HCT116 (cell line): ENCODE measurements at regions of chr7 and their contacts with region 1.

Region 1: GRCh38 chr7:29921404-29922010 is 68.1 kb downstream of the SCRN1 start:
- DNase-seq: peak; percentile 46
- ATAC-seq: peak; percentile 93
- H3K4me3 ChIP-seq: no peak overlapping the region
- H3K27ac ChIP-seq: no peak overlapping the region
- H3K4me1 ChIP-seq: no peaks in the 10 kb centered on the region
- H3K27me3 ChIP-seq: no peaks in the 10 kb centered on the region
- CTCF ChIP-seq: peak; percentile 77 to 96 (median 88)
- POLR2A ChIP-seq: no peak
- RAD21 ChIP-seq: peak; percentile 86

Region 2: GRCh38 chr7:29639881-29640595 is 281.5 kb before region 1 on chr7:
- CTCF ChIA-PET with region 1: interaction called, 5 read pairs
- POLR2A ChIA-PET with region 1: no interaction called
- RAD21 ChIA-PET with region 1: no interaction called
- intact Hi-C with region 1: loop called (anchors 2 kb)
- DNase-seq: no peak
- ATAC-seq: no peak
- H3K4me3 ChIP-seq: no peak overlapping the region
- H3K27ac ChIP-seq: no peak overlapping the region
- H3K4me1 ChIP-seq: peaks cover 11 to 31% of the 10 kb centered on the region in 2 experiments
- H3K27me3 ChIP-seq: no peaks in the 10 kb centered on the region
- CTCF ChIP-seq: no peak
- POLR2A ChIP-seq: no peak
- RAD21 ChIP-seq: no peak

Region 3: DNA sequence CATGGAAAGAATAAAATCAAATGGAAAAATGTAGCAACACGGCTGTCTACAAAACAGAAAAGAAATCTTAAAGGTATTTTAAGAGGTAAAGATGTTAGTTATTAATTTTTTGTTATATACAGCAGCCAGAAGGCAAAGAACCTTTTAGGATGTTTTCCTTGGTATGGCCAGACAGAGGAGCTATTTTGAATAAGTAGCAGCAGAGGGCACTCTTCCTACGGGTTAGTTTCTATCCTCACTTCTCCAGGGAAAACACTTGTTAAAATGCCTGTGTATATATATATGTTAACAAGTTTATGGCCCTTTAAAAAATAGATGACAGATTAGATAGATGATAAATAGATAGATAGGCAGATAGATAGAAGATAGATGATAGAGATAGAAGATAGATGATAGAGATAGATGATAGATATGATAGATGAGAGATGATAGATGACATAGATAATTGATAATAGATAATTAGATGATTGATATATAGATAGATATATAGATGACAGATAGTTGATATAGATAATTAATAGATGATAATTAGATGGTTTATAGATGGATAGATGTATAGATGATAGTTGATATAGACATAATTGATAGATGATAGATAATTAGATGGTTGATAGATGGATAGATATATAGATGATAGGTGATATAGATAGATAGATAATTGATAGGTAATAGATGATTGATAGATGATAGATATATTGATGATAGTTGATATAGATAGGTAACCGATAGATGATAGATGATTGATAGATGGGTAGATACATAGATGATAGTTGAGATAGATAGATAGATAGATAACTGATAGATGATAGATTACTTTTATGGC is 173.0 kb before region 1 on chr7:
- CTCF ChIA-PET with region 1: interaction called, 37 read pairs
- POLR2A ChIA-PET with region 1: no interaction called
- RAD21 ChIA-PET with region 1: interaction called, 4 read pairs
- intact Hi-C with region 1: loop called (anchors 1 kb)
- DNase-seq: peak; percentile 35
- ATAC-seq: peak; percentile 91
- H3K4me3 ChIP-seq: no peak overlapping the region
- H3K27ac ChIP-seq: no peak overlapping the region
- H3K4me1 ChIP-seq: no peaks in the 10 kb centered on the region
- H3K27me3 ChIP-seq: no peaks in the 10 kb centered on the region
- CTCF ChIP-seq: peak; percentile 56 to 79 (median 62)
- POLR2A ChIP-seq: no peak
- RAD21 ChIP-seq: peak; percentile 74

Region 4: GRCh38 chr7:29764227-29764626 is 157.3 kb before region 1 on chr7:
- CTCF ChIA-PET with region 1: interaction called, 10 read pairs
- POLR2A ChIA-PET with region 1: no interaction called
- RAD21 ChIA-PET with region 1: interaction called, 3 to 4 read pairs
- intact Hi-C with region 1: loop called (anchors 1 kb)
- DNase-seq: no peak
- ATAC-seq: peak; percentile 90
- H3K4me3 ChIP-seq: no peak overlapping the region
- H3K27ac ChIP-seq: no peak overlapping the region
- H3K4me1 ChIP-seq: no peaks in the 10 kb centered on the region
- H3K27me3 ChIP-seq: no peaks in the 10 kb centered on the region
- CTCF ChIP-seq: peak; percentile 41 to 59 (median 55); a peak in 5 of 6 replicates
- POLR2A ChIP-seq: no peak
- RAD21 ChIP-seq: peak; percentile 62

Region 5: DNA sequence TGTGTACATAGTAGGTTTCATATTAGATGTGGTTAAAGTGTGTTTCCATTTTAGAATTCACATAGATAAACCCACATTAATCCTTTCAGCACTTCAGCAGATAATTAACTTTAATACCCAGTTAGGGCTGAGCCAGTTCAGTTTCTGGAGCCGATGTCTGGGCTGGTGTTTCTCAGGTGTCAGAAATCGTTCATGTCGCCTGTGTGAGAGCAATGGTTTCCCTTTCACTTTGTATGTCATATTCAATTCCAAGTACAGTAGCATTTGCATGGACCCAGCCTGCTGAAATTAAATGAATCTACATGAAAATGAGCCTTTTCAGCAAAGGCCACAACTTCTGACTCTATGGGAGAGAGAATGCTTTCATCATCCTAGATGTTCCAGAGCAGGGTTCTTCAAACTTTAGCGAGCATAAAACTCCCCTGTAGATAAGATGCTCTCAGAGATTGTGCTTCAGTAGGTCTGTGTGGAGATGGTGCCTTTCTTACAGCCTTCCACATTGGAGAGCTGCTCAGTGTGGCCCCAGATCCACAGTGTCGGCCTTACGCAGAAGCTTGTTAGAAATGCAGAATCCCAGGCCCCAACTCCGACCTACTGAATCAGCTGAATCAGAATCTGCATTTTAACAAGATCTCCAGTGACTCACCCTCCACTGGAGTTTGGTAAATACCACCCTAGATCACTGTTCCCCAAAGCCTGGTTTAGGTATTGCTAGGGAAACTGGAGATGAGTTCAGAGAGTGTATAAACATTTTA is 95.6 kb before region 1 on chr7:
- CTCF ChIA-PET with region 1: no interaction called
- POLR2A ChIA-PET with region 1: no interaction called
- RAD21 ChIA-PET with region 1: no interaction called
- intact Hi-C with region 1: no loop called
- DNase-seq: no peak
- ATAC-seq: no peak
- H3K4me3 ChIP-seq: no peak overlapping the region
- H3K27ac ChIP-seq: no peak overlapping the region
- H3K4me1 ChIP-seq: no peaks in the 10 kb centered on the region
- H3K27me3 ChIP-seq: no peaks in the 10 kb centered on the region
- CTCF ChIP-seq: no peak
- POLR2A ChIP-seq: no peak
- RAD21 ChIP-seq: no peak